AG04449 (cell line): ENCODE measurements at regions of chr9 and their contacts with region 1.

Region 1: GRCh38 chr9:97921959-97922724 is at the start of gene TRMO:
- DNase-seq: peak; percentile 92
- H3K4me3 ChIP-seq: peak within 1 kb of the TSS; percentile 78
- CTCF ChIP-seq: peak; percentile 74

Region 2: GRCh38 chr9:97501177-97501971 is 420.8 kb before region 1 on chr9 and contains the start of gene TMOD1:
- CTCF ChIA-PET with region 1: no interaction called
- POLR2A ChIA-PET with region 1: no interaction called
- DNase-seq: no peak
- H3K4me3 ChIP-seq: peak within 1 kb of the TSS; percentile 38
- CTCF ChIP-seq: peak; percentile 1

Region 3: DNA sequence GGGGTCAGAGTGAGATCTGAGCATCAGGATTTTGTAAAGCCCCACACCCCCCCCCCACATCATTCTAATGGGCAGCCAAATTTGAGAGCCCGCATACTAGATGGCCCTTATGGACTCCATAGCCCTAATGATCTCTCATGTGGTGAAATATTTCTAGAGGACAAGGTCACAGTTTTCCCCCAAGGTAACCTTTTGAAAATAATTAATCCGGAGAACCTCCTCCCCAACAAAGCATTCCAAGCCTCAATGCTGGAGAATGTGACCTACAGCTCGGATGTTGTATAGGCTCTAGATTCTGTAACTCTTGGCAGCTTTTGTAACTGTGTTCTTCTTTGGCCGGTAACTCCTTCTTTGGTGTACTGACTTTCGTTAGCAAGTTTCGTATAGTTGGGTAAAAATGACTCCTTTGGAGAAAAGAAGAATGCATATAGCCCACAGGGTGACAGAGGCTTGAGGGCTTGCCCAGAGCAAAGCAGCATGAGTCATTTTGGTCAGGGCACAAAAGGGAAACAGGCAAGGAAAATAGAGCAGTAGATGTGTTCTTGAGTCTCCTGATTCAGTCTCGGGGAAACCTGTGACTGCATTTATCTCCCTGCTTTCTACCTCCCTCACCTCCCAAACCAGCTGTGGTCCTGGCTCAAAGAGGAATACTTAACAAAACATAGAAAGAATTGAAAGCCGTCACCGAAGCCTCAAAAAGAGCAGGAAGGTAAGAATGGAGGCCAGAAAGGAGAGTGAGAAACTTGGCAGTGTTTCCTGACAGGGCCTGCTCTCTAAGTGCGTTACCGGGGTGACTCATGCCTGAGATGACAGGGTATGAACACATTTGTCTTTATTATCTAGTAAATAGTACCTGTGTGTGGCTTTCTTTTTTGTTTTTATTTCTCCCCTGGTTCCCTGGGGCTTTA is 218.5 kb before region 1 on chr9:
- CTCF ChIA-PET with region 1: interaction called, 18 read pairs
- POLR2A ChIA-PET with region 1: no interaction called
- DNase-seq: peak; percentile 45
- H3K4me3 ChIP-seq: no peak overlapping the region
- CTCF ChIP-seq: no peak

Region 4: DNA sequence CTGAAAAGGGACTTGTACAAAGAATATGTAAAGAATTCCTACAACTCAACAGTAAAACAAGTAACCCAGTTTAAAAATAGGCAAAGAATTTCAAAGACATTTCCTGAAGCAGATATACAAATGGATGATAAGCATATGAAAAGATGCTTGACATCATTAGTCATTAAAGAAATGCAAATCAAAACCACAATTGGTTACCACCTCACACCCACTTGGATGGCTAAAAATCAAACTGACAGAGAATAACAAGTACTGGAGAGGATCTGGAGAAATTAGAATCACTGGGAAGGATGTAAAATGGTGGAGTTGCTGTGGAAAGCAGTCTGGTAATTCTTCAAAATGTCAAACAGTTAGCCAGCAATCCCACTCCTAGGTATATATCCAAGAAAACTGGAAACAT is 81.6 kb before region 1 on chr9:
- CTCF ChIA-PET with region 1: no interaction called
- POLR2A ChIA-PET with region 1: no interaction called
- DNase-seq: peak; percentile 42
- H3K4me3 ChIP-seq: no peak overlapping the region
- CTCF ChIP-seq: no peak

Region 5: GRCh38 chr9:97863314-97863713 is 58.8 kb before region 1 on chr9:
- CTCF ChIA-PET with region 1: no interaction called
- POLR2A ChIA-PET with region 1: no interaction called
- DNase-seq: no peak
- H3K4me3 ChIP-seq: no peak overlapping the region
- CTCF ChIP-seq: no peak

Region 6: GRCh38 chr9:97906236-97906831 is 15.8 kb before region 1 on chr9:
- CTCF ChIA-PET with region 1: interaction called, 62 read pairs
- POLR2A ChIA-PET with region 1: interaction called, 3 read pairs
- DNase-seq: no peak
- H3K4me3 ChIP-seq: no peak overlapping the region
- CTCF ChIP-seq: no peak

Region 7: DNA sequence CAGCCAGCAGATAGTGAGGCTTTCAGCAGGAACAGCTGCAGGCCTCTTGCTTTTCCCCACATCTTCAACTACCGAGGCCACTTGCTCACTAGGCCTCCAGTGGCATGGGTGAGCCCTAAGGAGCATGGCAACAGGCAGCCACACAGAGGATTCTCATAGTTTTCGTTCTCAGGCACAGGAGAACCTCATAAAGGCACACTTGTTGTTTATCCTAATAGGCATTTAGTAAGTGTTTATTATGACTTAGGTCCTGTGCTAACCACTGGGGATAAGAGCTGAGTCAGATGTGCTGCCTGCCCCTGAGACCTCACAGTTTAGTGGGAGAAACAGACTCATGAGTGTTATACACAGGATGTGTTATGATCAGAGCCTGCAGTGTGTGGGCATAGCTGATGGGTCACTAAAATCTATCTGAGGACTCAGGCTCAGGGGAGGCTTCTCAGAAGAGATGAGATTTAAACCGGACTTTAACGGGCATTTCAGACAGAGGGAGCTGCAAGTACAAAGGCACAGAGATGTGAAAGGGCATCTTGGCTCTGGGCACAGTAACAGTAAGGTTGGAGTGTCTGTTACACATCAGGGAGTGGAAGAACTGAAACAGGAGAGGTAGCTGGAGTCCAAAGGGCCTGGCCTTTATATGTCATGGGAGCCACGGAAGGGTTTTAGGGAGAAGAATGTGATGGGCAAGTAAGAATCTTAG is 36.8 kb after region 1 on chr9:
- CTCF ChIA-PET with region 1: interaction called, 21 read pairs
- POLR2A ChIA-PET with region 1: no interaction called
- DNase-seq: peak; percentile 16
- H3K4me3 ChIP-seq: no peak overlapping the region
- CTCF ChIP-seq: no peak

Region 8: GRCh38 chr9:98034593-98035546 is 112.7 kb after region 1 on chr9:
- CTCF ChIA-PET with region 1: interaction called, 47 read pairs
- POLR2A ChIA-PET with region 1: interaction called, 3 read pairs
- DNase-seq: no peak
- H3K4me3 ChIP-seq: no peak overlapping the region
- CTCF ChIP-seq: peak; percentile 80

Region 9: GRCh38 chr9:98176391-98177259 is 254.5 kb after region 1 on chr9:
- CTCF ChIA-PET with region 1: no interaction called
- POLR2A ChIA-PET with region 1: no interaction called
- DNase-seq: no peak
- H3K4me3 ChIP-seq: no peak overlapping the region
- CTCF ChIP-seq: no peak

Region 10: GRCh38 chr9:98192503-98193335 is 270.6 kb after region 1 on chr9 and contains the start of gene CORO2A:
- CTCF ChIA-PET with region 1: interaction called, 15 read pairs
- POLR2A ChIA-PET with region 1: no interaction called
- DNase-seq: no peak
- H3K4me3 ChIP-seq: peak within 1 kb of the TSS; percentile 65
- CTCF ChIP-seq: peak; percentile 71

Region 11: DNA sequence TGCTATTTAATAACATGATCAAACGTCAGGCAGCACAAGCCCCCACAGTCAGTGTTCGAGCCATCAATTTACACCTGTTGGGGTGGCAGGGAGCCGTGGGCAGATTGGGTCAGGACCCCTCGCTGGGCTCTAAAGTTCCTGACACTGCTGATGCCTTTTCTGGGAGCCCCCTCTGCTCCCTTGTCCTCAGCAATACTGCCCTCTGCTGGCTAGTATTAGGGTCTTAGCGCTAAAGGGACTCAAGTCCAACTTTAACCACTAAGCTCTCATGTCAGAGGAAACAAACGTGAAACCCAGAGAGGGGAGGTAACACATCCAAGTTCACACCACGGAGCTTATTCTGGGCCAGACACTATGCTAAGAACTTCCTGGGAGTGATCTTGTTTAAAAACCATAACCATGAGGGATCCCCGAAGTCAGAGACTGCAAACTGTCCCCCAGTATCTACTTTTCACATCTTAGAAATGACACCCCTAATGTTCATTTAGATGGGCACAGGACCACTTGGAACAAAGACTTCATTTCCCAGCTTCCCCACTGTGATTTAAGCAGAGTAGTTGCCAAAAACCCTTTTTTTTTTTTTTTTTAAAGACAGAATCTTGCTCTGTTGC is 853.8 kb after region 1 on chr9:
- CTCF ChIA-PET with region 1: interaction called, 11 read pairs
- POLR2A ChIA-PET with region 1: no interaction called
- DNase-seq: peak; percentile 24
- H3K4me3 ChIP-seq: no peak overlapping the region
- CTCF ChIP-seq: peak; percentile 78